Right lobe of liver (tissue), 6 donors: ENCODE measurements at regions of chr2 and their contacts with region 1.

Region 1: GRCh38 chr2:35410431-35411061 is 945.0 kb upstream of the CRIM1 start:
- DNase-seq: peak; percentile 62 to 70 (median 64)
- ATAC-seq: peak; percentile 74 to 79 (median 78)
- H3K4me3 ChIP-seq: no peak overlapping the region
- H3K27ac ChIP-seq: no peak overlapping the region
- H3K4me1 ChIP-seq: no peaks in the 10 kb centered on the region
- H3K27me3 ChIP-seq: no peaks in the 10 kb centered on the region
- CTCF ChIP-seq: peak; percentile 59 to 97 (median 92)
- POLR2A ChIP-seq: no peak

Region 2: DNA sequence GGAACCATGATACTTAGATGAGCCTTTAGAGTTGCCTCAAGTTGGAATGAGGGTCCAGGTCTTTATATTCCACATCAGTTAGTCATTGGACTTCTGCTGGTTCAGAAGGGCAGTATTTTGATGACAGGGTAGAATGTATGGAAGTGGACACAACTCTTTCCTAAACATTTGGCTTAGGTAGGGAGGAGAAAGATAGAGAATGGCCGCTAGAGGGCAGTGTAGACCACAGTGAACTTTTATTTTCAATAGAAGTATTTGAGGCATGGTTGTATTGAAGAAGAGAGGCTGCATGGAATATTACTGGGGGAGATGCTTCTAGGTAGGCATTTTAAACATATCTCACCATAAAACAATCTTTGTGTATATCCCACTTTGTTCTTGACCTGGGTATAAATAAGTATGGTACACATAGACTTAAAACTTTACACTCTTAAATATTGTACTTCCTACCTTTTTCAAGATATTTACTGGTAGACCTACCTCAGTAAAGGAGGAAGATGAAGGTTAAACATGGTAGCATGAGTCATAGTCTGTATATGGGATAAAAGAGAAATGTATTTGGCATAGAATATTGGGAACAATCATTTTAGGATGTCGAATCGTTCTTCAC is 1313.9 kb before region 1 on chr2:
- intact Hi-C with region 1: loop called in 1 of 2 experiments (anchors 10 kb)
- DNase-seq: peak in 1 of 3 donors; percentile 59
- ATAC-seq: peak; percentile 83 to 89 (median 88)
- H3K4me3 ChIP-seq: no peak overlapping the region
- H3K27ac ChIP-seq: no peak overlapping the region
- H3K4me1 ChIP-seq: no peaks in the 10 kb centered on the region
- H3K27me3 ChIP-seq: no peaks in the 10 kb centered on the region
- CTCF ChIP-seq: peak; percentile 76 to 88 (median 80)
- POLR2A ChIP-seq: no peak

Region 3: DNA sequence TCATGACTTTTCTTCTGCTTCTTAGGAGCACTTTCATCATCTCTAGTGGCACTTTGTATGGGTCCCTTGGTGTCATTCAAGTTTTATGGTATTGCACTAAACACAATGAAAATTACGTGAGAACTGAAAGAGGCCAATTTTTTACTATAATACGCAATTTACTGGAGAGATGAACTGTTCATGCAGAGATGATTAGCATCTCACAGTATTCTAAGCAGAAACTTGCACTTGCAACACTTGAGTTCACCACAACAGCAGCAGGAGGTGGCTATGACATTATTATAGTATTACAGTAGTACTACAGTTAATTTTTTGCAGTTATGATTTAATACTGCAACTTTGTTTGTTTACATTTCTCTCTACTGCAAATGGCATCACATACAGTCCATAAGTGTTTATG is 151.9 kb after region 1 on chr2:
- intact Hi-C with region 1: no loop called
- DNase-seq: no peak
- ATAC-seq: no peak
- H3K4me3 ChIP-seq: no peak overlapping the region
- H3K27ac ChIP-seq: no peak overlapping the region
- H3K4me1 ChIP-seq: no peaks in the 10 kb centered on the region
- H3K27me3 ChIP-seq: no peaks in the 10 kb centered on the region
- CTCF ChIP-seq: no peak
- POLR2A ChIP-seq: no peak